Spleen (tissue), 13 donors: ENCODE measurements at regions of chr3 and their contacts with region 1.

Region 1: GRCh38 chr3:191388823-191389222 is 58.5 kb upstream of the UTS2B start:
- DNase-seq: no peak
- H3K4me3 ChIP-seq: no peak overlapping the region
- H3K27ac ChIP-seq: no peak overlapping the region
- H3K4me1 ChIP-seq: no peaks in the 10 kb centered on the region
- H3K27me3 ChIP-seq: no peaks in the 10 kb centered on the region
- CTCF ChIP-seq: peak in 5 of 11 experiments; percentile 15 to 34 (median 26)
- POLR2A ChIP-seq: no peak

Region 2: DNA sequence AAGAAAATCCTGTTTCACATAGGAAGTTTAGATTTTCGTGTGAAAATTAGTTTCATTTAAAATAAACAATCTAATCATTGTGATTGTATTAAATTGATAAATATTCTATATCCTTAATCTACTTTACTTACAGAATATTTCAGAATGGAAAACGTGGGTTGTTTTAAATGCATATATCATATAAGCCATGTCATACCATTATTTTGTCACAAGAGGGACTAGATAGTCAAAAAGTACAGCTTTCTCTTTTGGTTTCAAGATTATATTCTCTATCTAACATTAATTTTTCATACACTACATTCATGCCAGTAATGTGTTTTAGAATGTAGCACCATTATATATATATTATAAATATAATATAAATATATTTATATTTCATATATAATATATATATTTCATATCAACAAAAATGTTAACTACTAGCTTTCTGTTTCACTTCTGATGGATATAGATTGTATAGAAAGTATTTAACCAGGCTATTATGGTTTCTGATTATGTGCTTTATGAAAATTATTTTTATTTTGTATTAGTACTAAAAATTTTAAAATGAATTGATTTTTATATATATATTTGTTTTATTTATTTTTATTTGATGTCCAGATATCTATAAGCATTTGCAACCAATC is 144.5 kb before region 1 on chr3:
- intact Hi-C with region 1: loop called (anchors 10 kb)
- DNase-seq: no peak
- H3K4me3 ChIP-seq: no peak overlapping the region
- H3K27ac ChIP-seq: peak overlapping the region in 3 of 8 donors; percentile 28 to 77 (median 70)
- H3K4me1 ChIP-seq: peaks cover 0 to 36% (median 13%) of the 10 kb centered on the region in 6 donors
- H3K27me3 ChIP-seq: no peaks in the 10 kb centered on the region
- CTCF ChIP-seq: peak in 10 of 11 experiments; percentile 20 to 77 (median 62)
- POLR2A ChIP-seq: no peak

Region 3: GRCh38 chr3:191328962-191329653 is 59.7 kb before region 1 on chr3 and contains the start of gene CCDC50:
- intact Hi-C with region 1: loop called (anchors 10 kb)
- DNase-seq: peak; percentile 94
- H3K4me3 ChIP-seq: peak within 1 kb of the TSS; percentile 51 to 90 (median 64)
- H3K27ac ChIP-seq: peak within 1 kb of the TSS; percentile 93 to 98 (median 96)
- H3K4me1 ChIP-seq: peaks cover 12 to 58% (median 48%) of the 10 kb centered on the region in 6 donors
- H3K27me3 ChIP-seq: peaks cover 0 to 10% (median 0%) of the 10 kb centered on the region in 7 donors
- CTCF ChIP-seq: peak in 1 of 11 experiments; percentile 8
- POLR2A ChIP-seq: peak in 1 of 3 donors; percentile 43
- total RNA-seq, gene CCDC50: 100 to 167 (median 117) TPM